ENCODE measurements at regions of chr20 and their contacts with region 1.

Region 1: GRCh38 chr20:47317127-47317895 is 39.2 kb downstream of the ZMYND8 start:
- DNase-seq: peak in 8 of 10 donors; percentile 3 to 66 (median 16)
- ATAC-seq: peak; percentile 56 to 62
- H3K4me3 Mint-ChIP-seq: peak overlapping the region; percentile 16 to 73 (median 38)
- H3K27ac Mint-ChIP-seq: peak overlapping the region; percentile 71 to 91 (median 88)
- H3K4me1 Mint-ChIP-seq: peaks cover 31 to 89% (median 77%) of the 10 kb centered on the region in 4 donors
- H3K27me3 Mint-ChIP-seq: no peaks in the 10 kb centered on the region

Region 2: DNA sequence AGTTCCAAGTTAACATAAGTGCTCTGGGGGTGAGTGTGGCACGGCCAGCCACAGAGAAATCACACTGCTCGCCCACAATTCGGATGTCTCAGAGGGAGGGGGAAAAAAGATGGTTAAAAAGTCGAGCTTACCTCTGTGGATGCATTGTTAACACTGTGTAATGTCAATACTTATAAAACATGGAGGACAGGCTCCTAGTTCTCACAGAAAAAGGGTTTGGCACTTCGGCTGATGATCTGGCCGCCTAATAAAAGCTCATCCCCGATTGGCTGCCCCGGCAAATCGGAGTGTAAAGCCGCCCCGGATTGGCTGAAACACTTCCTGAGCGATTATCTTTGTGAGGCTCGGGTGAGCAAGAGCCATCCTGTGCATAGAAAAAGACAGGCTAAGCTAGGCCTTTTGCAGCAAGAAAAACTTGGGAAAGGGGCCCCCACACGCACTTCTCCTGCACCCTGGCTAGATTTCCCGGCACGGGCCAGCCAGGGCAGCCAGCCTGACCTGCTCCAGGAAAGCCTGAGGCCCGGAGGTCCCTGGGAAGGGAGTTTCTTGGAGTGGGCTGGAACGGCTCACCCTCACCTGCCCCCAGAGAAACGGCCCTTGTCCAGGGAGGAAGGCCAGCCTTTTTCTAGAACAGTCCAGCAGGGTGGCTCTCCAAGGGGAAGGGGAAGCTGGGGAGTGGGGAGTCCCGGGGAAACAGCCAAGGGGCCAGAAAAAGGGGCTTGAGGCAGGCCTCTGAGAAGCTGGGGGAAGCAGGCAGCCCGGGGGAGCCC is 39.4 kb after region 1 on chr20 and contains the start of gene ZMYND8:
- POLR2A ChIA-PET with region 1: interaction called, 13 read pairs
- DNase-seq: peak; percentile 72 to 100 (median 96)
- ATAC-seq: peak; percentile 79 to 84
- H3K4me3 Mint-ChIP-seq: peak within 1 kb of the TSS in 7 of 10 donors; percentile 85 to 97 (median 92)
- H3K27ac Mint-ChIP-seq: peak within 1 kb of the TSS in 8 of 10 donors; percentile 98 to 100 (median 99)
- H3K4me1 Mint-ChIP-seq: peaks cover 0 to 57% (median 47%) of the 10 kb centered on the region in 4 donors
- H3K27me3 Mint-ChIP-seq: no peaks in the 10 kb centered on the region
- polyA plus RNA-seq, gene ZMYND8: 8.9 to 20.4 (median 13.5) TPM